ENCODE measurements at regions of chr12 and their contacts with region 1.

Region 1: GRCh38 chr12:22856178-22856577 is 231.2 kb downstream of the ETNK1 start:
- H3K4me3 ChIP-seq: no peak overlapping the region
- H3K27ac ChIP-seq: no peak overlapping the region
- H3K4me1 ChIP-seq: no peaks in the 10 kb centered on the region
- CTCF ChIP-seq: no peak

Region 2: DNA sequence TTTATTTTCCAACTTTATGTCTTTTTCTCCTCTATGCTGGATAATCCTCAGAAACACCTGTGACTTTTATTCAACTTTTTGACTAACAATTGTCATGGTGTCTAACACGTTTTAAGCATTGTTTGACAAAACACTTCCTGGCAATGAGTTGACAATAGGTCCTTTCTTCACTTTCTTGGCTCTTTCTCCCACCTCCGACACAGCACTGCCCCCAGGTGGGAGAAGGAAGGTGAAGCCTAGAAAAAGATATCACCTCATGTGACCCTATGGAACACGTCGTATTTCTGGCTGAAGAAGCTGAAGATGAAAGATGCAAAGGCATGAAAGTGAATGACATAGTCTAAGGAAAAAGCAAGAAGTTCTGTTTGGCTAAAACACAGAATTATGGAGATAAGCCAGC is 198.8 kb after region 1 on chr12:
- CTCF ChIA-PET with region 1: interaction called, 20 read pairs
- POLR2A ChIA-PET with region 1: no interaction called
- H3K4me3 ChIP-seq: no peak overlapping the region
- H3K27ac ChIP-seq: no peak overlapping the region
- H3K4me1 ChIP-seq: no peaks in the 10 kb centered on the region
- CTCF ChIP-seq: peak; percentile 46; the same call in 1 of the 2 replicates